Transverse colon (tissue), 4 donors: ENCODE measurements at regions of chr2 and their contacts with region 1.

Region 1: GRCh38 chr2:2590841-2591541 is 259.9 kb upstream of the MYT1L start:
- DNase-seq: no peak
- H3K4me3 ChIP-seq: no peak overlapping the region
- H3K27ac ChIP-seq: no peak overlapping the region
- H3K4me1 ChIP-seq: no peaks in the 10 kb centered on the region
- H3K27me3 ChIP-seq: no peaks in the 10 kb centered on the region
- CTCF ChIP-seq: no peak
- EP300 ChIP-seq: no peak
- POLR2A ChIP-seq: no peak

Region 2: DNA sequence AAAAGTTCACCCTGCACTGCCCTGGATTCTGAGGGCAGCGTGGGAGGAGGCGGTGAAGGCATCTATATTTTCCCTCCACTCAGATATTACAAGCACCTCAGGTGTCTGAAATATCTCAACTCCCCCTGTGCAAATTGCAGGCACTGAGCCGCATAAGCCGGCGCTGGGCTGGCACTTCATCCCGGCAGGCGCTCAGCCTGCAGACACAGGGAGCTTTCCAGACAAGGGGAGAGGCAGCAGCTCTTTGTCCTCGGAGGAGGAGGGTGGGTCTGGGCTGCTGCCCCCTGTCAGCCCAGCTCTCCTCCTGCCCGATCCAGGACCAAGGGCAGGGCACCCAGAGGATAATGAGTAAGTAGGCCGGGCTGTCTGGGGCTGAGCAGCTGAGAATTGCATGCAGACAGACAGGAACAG is 70.6 kb before region 1 on chr2:
- in situ Hi-C with region 1: no loop called
- intact Hi-C with region 1: no loop called
- DNase-seq: no peak
- H3K4me3 ChIP-seq: no peak overlapping the region
- H3K27ac ChIP-seq: no peak overlapping the region
- H3K4me1 ChIP-seq: no peaks in the 10 kb centered on the region
- H3K27me3 ChIP-seq: no peaks in the 10 kb centered on the region
- CTCF ChIP-seq: no peak
- EP300 ChIP-seq: no peak
- POLR2A ChIP-seq: no peak

Region 3: DNA sequence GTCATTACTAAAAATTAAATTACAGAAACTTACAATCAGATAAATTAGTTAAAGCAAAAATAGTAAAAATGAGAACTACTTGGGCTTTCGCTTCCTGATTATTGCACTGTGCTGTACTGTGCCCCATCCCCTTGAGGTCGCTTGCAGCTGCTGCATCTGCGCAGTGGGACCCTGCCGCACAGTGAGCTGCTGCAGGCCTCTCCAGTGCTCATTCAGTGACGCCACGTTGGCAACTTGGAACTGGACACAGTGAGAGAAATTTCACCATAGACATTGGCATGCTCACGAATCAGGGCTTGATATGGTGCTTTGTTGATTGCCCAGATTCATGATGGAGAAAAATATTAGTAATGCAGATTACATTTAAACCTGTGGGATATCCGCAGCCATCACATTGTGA is 30.9 kb after region 1 on chr2:
- in situ Hi-C with region 1: no loop called
- intact Hi-C with region 1: no loop called
- DNase-seq: no peak
- H3K4me3 ChIP-seq: no peak overlapping the region
- H3K27ac ChIP-seq: no peak overlapping the region
- H3K4me1 ChIP-seq: no peaks in the 10 kb centered on the region
- H3K27me3 ChIP-seq: no peaks in the 10 kb centered on the region
- CTCF ChIP-seq: no peak
- EP300 ChIP-seq: no peak
- POLR2A ChIP-seq: no peak

Region 4: DNA sequence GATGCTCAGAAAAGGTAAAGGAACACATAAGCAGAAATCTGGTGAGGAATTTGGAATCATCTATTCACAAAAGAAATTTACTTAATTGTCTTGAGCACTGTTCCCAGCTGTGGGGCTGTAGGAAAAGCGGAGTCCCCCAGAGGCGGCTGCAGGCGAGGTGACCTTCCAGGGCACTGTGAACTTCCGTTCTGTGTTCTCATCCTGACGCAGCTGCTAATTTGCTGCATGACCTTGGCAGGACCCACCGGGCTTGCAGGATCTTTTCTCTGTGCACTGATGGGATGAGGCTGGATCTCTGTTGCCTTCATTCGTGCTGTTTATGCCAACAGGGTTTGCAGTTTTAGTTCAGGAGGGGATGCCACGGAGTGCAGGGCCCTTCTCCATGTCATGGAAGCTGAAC is 42.0 kb after region 1 on chr2:
- in situ Hi-C with region 1: no loop called
- intact Hi-C with region 1: loop called (anchors 1 kb)
- DNase-seq: no peak
- H3K4me3 ChIP-seq: no peak overlapping the region
- H3K27ac ChIP-seq: no peak overlapping the region
- H3K4me1 ChIP-seq: no peaks in the 10 kb centered on the region
- H3K27me3 ChIP-seq: no peaks in the 10 kb centered on the region
- CTCF ChIP-seq: no peak
- EP300 ChIP-seq: no peak
- POLR2A ChIP-seq: no peak